ENCODE measurements at regions of chr1 and their contacts with region 1.

Region 1: GRCh38 chr1:94039514-94039870 is 81.5 kb downstream of the ABCA4 start:
- DNase-seq: peak; percentile 74
- H3K4me3 Mint-ChIP-seq: no peak overlapping the region
- H3K27ac Mint-ChIP-seq: no peak overlapping the region
- H3K4me1 Mint-ChIP-seq: peaks cover 15% of the 10 kb centered on the region
- H3K27me3 Mint-ChIP-seq: peaks cover 26% of the 10 kb centered on the region

Region 2: GRCh38 chr1:93878889-93879586 is 160.5 kb before region 1 on chr1 and contains the start of gene DNTTIP2:
- CTCF ChIA-PET with region 1: no interaction called
- intact Hi-C with region 1: loop called (anchors 1 kb)
- DNase-seq: peak; percentile 95
- H3K4me3 Mint-ChIP-seq: peak within 1 kb of the TSS; percentile 92
- H3K27ac Mint-ChIP-seq: peak within 1 kb of the TSS; percentile 97
- H3K4me1 Mint-ChIP-seq: peaks cover 42% of the 10 kb centered on the region
- H3K27me3 Mint-ChIP-seq: no peaks in the 10 kb centered on the region
- total RNA-seq, gene DNTTIP2: 58.5 to 64.5 TPM

Region 3: GRCh38 chr1:93909146-93910050 is 130.1 kb before region 1 on chr1 and contains the start of gene GCLM:
- CTCF ChIA-PET with region 1: no interaction called
- intact Hi-C with region 1: loop called (anchors 1 kb)
- DNase-seq: peak; percentile 88
- H3K4me3 Mint-ChIP-seq: peak within 1 kb of the TSS; percentile 82
- H3K27ac Mint-ChIP-seq: peak within 1 kb of the TSS; percentile 87
- H3K4me1 Mint-ChIP-seq: peaks cover 27% of the 10 kb centered on the region
- H3K27me3 Mint-ChIP-seq: no peaks in the 10 kb centered on the region
- total RNA-seq, gene GCLM: 19.5 to 22.7 TPM

Region 4: DNA sequence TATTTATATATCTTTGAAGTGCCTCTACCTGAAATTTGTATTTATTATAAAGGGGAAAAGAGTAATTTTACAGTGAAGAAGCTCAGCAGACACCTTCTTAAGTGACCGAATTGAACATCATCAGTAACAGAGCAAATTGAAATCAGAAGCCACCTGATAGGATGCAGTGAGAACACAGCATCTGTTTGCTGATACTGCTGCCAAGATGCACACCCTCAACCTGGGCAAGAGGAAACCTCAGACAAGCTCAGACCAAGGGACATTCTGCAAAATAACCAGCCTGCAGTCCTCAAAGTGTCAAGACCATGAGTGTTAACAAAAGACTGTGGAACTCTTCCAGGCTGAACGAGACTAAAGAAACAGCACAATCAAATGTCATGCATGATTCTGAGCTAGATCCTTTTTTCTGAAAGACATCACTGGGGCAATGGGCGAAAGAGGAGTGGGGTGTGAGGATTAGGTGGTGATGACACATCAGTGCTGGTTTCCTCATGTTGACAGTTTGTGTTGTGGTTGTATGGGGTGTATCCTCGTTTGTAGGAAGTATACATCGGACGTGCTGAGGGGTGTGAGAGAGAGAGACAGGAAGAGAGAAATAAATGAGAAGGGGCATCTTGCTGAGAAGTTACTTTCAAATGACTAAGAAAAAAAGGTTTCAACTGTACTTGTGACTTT is 22.2 kb before region 1 on chr1:
- CTCF ChIA-PET with region 1: interaction called, 19 read pairs
- intact Hi-C with region 1: loop called (anchors 1 kb)
- DNase-seq: peak; percentile 48
- H3K4me3 Mint-ChIP-seq: no peak overlapping the region
- H3K27ac Mint-ChIP-seq: no peak overlapping the region
- H3K4me1 Mint-ChIP-seq: peaks cover 6% of the 10 kb centered on the region
- H3K27me3 Mint-ChIP-seq: no peaks in the 10 kb centered on the region

Region 5: DNA sequence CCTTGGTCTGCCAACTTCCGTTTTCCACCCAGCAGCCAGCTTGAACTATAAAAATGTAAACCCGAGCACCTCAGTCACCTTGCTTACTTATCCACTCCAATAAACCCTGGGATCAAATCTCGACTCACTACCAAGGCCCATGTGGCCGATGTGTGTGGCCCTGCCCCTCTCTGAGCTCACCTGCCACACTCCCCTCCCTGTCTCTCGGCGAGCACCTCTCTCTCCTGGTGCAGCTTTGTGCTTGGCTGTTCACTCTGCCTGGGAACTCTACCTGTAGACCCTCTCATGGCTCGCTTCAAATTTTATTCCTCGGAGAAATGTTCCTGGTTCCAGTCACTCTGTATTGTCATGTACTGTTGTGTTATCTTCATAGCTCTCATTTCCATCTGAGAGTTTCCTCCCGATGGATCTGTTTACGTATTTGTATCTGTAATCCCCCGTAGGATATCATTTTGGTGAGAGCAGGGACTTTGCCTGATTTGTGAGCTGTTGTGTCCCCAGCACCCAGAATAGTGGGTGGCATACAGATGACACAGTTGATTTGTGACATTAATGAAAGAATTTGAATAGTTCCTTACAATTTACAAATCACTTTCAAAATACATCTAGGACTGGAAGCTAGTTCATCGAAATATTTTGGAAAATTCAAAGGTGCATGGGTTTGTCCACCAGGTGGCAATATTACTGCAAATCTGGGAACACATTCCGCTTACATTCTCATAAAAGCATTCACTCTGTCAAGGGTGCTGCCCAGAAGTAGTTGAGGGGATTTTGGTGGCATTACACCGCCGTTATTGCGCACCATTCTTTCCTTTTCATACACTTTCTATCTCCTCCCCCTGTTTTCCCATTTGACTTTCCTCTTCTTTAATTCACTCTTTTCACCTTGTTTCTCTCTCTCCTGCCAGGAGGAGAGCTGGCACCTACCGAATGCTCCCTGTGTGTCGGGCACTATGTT is 13.8 kb before region 1 on chr1:
- CTCF ChIA-PET with region 1: interaction called, 64 read pairs
- intact Hi-C with region 1: loop called (anchors 1 kb)
- DNase-seq: peak; percentile 51
- H3K4me3 Mint-ChIP-seq: no peak overlapping the region
- H3K27ac Mint-ChIP-seq: no peak overlapping the region
- H3K4me1 Mint-ChIP-seq: peaks cover 3% of the 10 kb centered on the region
- H3K27me3 Mint-ChIP-seq: no peaks in the 10 kb centered on the region